IMR-90 (cell line): ENCODE measurements at regions of chr11 and their contacts with region 1.

Region 1: DNA sequence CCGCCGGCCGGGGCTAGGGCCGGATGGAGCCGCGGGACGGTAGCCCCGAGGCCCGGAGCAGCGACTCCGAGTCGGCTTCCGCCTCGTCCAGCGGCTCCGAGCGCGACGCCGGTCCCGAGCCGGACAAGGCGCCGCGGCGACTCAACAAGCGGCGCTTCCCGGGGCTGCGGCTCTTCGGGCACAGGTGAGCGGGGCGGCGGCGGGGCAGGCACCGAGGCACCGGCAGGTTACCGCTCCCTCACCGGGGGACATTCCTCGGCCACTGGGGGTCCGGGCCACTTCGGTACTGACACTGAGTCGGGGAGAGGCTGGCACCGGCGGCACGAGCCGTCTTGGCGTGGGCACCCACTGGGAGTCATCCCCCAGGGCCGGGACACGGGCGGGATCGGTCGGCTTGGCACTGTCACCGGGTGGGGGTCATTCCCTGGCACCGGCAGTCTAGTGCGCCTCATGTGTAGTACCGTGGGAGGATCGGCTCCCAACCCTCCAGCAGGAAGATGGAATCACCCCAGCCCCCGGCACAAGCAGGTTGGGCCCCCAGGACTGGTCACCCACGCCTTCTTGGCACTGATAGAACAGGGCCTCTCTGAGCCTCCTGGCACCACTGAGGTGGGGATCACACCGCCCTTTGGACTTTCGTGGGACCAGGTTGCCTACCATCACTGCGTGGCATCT is 511 bp downstream of the DGKZ start:
- DNase-seq: no peak
- ATAC-seq: peak; percentile 2
- H3K4me3 ChIP-seq: peak overlapping the region; percentile 98
- H3K27ac ChIP-seq: peak overlapping the region; percentile 19; the same call in 1 of the 2 replicates
- H3K4me1 ChIP-seq: peaks cover 13% of the 10 kb centered on the region
- H3K27me3 ChIP-seq: peaks cover 4% of the 10 kb centered on the region; the same call in 1 of the 2 replicates
- CTCF ChIP-seq: no peak
- POLR2A ChIP-seq: no peak
- RAD21 ChIP-seq: no peak

Region 2: GRCh38 chr11:46083972-46084371 is 263.8 kb before region 1 on chr11:
- CTCF ChIA-PET with region 1: no interaction called
- POLR2A ChIA-PET with region 1: no interaction called
- dilution Hi-C with region 1: no loop called
- in situ Hi-C with region 1: no loop called
- intact Hi-C with region 1: no loop called
- DNase-seq: no peak
- ATAC-seq: no peak
- H3K4me3 ChIP-seq: no peak overlapping the region
- H3K27ac ChIP-seq: no peak overlapping the region
- H3K4me1 ChIP-seq: no peaks in the 10 kb centered on the region
- H3K27me3 ChIP-seq: no peaks in the 10 kb centered on the region
- CTCF ChIP-seq: no peak
- POLR2A ChIP-seq: no peak
- RAD21 ChIP-seq: no peak

Region 3: DNA sequence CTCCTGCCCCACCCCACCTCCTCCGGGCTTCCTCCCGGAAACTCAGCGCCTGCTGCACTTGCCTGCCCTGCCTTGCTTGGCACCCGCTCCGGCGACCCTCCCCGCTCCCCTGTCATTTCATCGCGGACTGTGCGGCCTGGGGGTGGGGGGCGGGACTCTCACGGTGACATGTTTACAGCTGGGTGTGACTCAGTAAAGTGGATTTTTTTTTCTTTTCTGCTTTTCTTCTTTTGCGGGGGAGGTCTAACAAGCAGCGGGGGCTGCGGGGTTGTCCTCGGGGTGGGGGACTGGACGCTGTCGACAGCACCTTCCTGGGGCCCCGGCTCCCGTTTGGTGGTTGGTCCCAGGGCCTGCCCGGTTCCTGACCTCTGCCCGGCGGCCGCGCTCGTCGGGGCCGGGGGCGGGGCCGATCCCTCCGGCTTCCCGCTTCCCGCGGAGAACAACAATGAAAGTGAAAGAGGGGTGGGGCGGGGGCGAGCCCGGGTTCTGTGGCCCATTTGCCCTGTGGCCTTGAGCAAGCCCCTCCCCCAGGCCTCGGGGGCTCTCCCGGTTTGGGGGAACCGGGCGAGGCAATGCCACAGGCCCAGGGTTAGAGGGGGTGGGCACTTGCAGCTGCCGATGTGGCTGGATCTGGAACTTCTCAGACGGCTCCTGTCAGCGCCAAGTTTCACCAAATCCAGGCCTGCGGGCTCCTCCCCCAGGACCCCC is 32.7 kb after region 1 on chr11:
- CTCF ChIA-PET with region 1: no interaction called
- POLR2A ChIA-PET with region 1: no interaction called
- dilution Hi-C with region 1: no loop called
- in situ Hi-C with region 1: no loop called
- intact Hi-C with region 1: loop called (anchors 1 kb)
- DNase-seq: no peak
- ATAC-seq: peak; percentile 49
- H3K4me3 ChIP-seq: peak overlapping the region; percentile 33
- H3K27ac ChIP-seq: peak overlapping the region; percentile 0; the same call in 1 of the 2 replicates
- H3K4me1 ChIP-seq: peaks cover 8% of the 10 kb centered on the region
- H3K27me3 ChIP-seq: no peaks in the 10 kb centered on the region
- CTCF ChIP-seq: no peak
- POLR2A ChIP-seq: no peak
- RAD21 ChIP-seq: no peak